ENCODE measurements at regions of chr1 and their contacts with region 1.

Region 1: GRCh38 chr1:67149179-67149770 is 14.5 kb upstream of the C1orf141 start:
- DNase-seq: peak; percentile 86
- H3K4me3 Mint-ChIP-seq: no peak overlapping the region
- H3K27ac Mint-ChIP-seq: peak overlapping the region; percentile 14
- H3K4me1 Mint-ChIP-seq: peaks cover 14% of the 10 kb centered on the region
- H3K27me3 Mint-ChIP-seq: peaks cover 33% of the 10 kb centered on the region
- CTCF ChIP-seq: peak; percentile 77

Region 2: GRCh38 chr1:66764994-66765578 is 384.2 kb before region 1 on chr1:
- CTCF ChIA-PET with region 1: interaction called, 36 read pairs
- POLR2A ChIA-PET with region 1: interaction called, 4 read pairs
- intact Hi-C with region 1: loop called (anchors 1 kb)
- DNase-seq: peak; percentile 65
- H3K4me3 Mint-ChIP-seq: no peak overlapping the region
- H3K27ac Mint-ChIP-seq: no peak overlapping the region
- H3K4me1 Mint-ChIP-seq: no peaks in the 10 kb centered on the region
- H3K27me3 Mint-ChIP-seq: no peaks in the 10 kb centered on the region
- CTCF ChIP-seq: peak; percentile 78

Region 3: GRCh38 chr1:66978201-66978600 is 171.1 kb before region 1 on chr1:
- CTCF ChIA-PET with region 1: interaction called, 24 read pairs
- POLR2A ChIA-PET with region 1: interaction called, 4 read pairs
- intact Hi-C with region 1: no loop called
- DNase-seq: no peak
- H3K4me3 Mint-ChIP-seq: no peak overlapping the region
- H3K27ac Mint-ChIP-seq: no peak overlapping the region
- H3K4me1 Mint-ChIP-seq: no peaks in the 10 kb centered on the region
- H3K27me3 Mint-ChIP-seq: no peaks in the 10 kb centered on the region
- CTCF ChIP-seq: no peak

Region 4: GRCh38 chr1:67013573-67013972 is 135.7 kb before region 1 on chr1:
- CTCF ChIA-PET with region 1: interaction called, 25 read pairs
- POLR2A ChIA-PET with region 1: no interaction called
- intact Hi-C with region 1: no loop called
- DNase-seq: peak; percentile 47
- H3K4me3 Mint-ChIP-seq: no peak overlapping the region
- H3K27ac Mint-ChIP-seq: peak overlapping the region; percentile 35
- H3K4me1 Mint-ChIP-seq: peaks cover 9% of the 10 kb centered on the region
- H3K27me3 Mint-ChIP-seq: no peaks in the 10 kb centered on the region
- CTCF ChIP-seq: no peak

Region 5: GRCh38 chr1:67053785-67054772 is 95.2 kb before region 1 on chr1 and contains the start of gene SLC35D1:
- CTCF ChIA-PET with region 1: interaction called, 125 read pairs
- POLR2A ChIA-PET with region 1: interaction called, 33 read pairs
- intact Hi-C with region 1: loop called (anchors 1 kb)
- DNase-seq: peak; percentile 69
- H3K4me3 Mint-ChIP-seq: peak within 1 kb of the TSS; percentile 93
- H3K27ac Mint-ChIP-seq: peak within 1 kb of the TSS; percentile 87
- H3K4me1 Mint-ChIP-seq: peaks cover 30% of the 10 kb centered on the region
- H3K27me3 Mint-ChIP-seq: no peaks in the 10 kb centered on the region
- CTCF ChIP-seq: no peak
- total RNA-seq, gene SLC35D1: 11.5 and 17.7 TPM in 2 replicates

Region 6: GRCh38 chr1:67118191-67118590 is 31.1 kb before region 1 on chr1:
- CTCF ChIA-PET with region 1: interaction called, 65 read pairs
- POLR2A ChIA-PET with region 1: no interaction called
- intact Hi-C with region 1: no loop called
- DNase-seq: no peak
- H3K4me3 Mint-ChIP-seq: no peak overlapping the region
- H3K27ac Mint-ChIP-seq: no peak overlapping the region
- H3K4me1 Mint-ChIP-seq: peaks cover 5% of the 10 kb centered on the region
- H3K27me3 Mint-ChIP-seq: no peaks in the 10 kb centered on the region
- CTCF ChIP-seq: no peak

Region 7: DNA sequence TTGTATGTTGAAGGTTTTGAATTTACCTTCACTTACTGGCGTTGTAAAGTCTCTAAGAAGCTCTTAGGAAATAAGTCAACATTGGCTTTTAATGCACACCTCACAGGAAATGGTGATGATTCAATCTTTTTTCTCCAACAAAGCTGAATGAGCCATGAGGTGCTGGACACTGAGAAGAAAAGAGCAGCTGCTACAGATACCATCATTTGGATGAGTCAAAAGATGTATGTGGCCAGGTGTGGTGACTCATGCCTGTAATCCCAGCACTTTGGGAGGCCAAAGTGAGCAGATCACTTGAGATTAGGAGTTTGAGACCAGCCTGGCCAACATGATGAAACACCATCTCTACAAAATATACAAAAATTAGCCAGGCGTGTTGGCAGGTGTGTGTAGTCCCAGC is 13.7 kb after region 1 on chr1:
- CTCF ChIA-PET with region 1: interaction called, 41 read pairs
- POLR2A ChIA-PET with region 1: interaction called, 4 read pairs
- intact Hi-C with region 1: no loop called
- DNase-seq: peak; percentile 92
- H3K4me3 Mint-ChIP-seq: no peak overlapping the region
- H3K27ac Mint-ChIP-seq: no peak overlapping the region
- H3K4me1 Mint-ChIP-seq: peaks cover 14% of the 10 kb centered on the region
- H3K27me3 Mint-ChIP-seq: no peaks in the 10 kb centered on the region
- CTCF ChIP-seq: no peak

Region 8: GRCh38 chr1:67230539-67230938 is 81.3 kb after region 1 on chr1:
- CTCF ChIA-PET with region 1: no interaction called
- POLR2A ChIA-PET with region 1: no interaction called
- intact Hi-C with region 1: no loop called
- DNase-seq: peak; percentile 5
- H3K4me3 Mint-ChIP-seq: no peak overlapping the region
- H3K27ac Mint-ChIP-seq: no peak overlapping the region
- H3K4me1 Mint-ChIP-seq: peaks cover 12% of the 10 kb centered on the region
- H3K27me3 Mint-ChIP-seq: no peaks in the 10 kb centered on the region
- CTCF ChIP-seq: no peak